ENCODE measurements at regions of chr22 and their contacts with region 1.

Region 1: GRCh38 chr22:50612528-50613221 is 12.1 kb downstream of the MAPK8IP2 start:
- DNase-seq: no peak
- ATAC-seq: peak in 1 of 4 donors; percentile 22
- H3K4me3 ChIP-seq: no peak overlapping the region
- H3K27ac ChIP-seq: no peak overlapping the region
- H3K4me1 ChIP-seq: peaks cover 0 to 6% (median 0%) of the 10 kb centered on the region in 12 donors
- H3K27me3 ChIP-seq: peaks cover 0 to 4% (median 0%) of the 10 kb centered on the region in 9 donors
- CTCF ChIP-seq: no peak
- POLR2A ChIP-seq: no peak

Region 2: GRCh38 chr22:50244420-50245213 is 368.1 kb before region 1 on chr22 and contains the start of gene TUBGCP6:
- intact Hi-C with region 1: loop called in 1 of 10 experiments (anchors 10 kb)
- DNase-seq: peak; percentile 96 to 98 (median 96)
- ATAC-seq: peak; percentile 88 to 96 (median 93)
- H3K4me3 ChIP-seq: peak within 1 kb of the TSS; percentile 51 to 99 (median 88)
- H3K27ac ChIP-seq: peak within 1 kb of the TSS; percentile 72 to 96 (median 88)
- H3K4me1 ChIP-seq: peaks cover 13 to 62% (median 44%) of the 10 kb centered on the region in 12 donors
- H3K27me3 ChIP-seq: no peaks in the 10 kb centered on the region
- CTCF ChIP-seq: peak in 7 of 12 donors; percentile 6 to 39 (median 24)
- POLR2A ChIP-seq: peak in 1 of 2 donors; percentile 81
- total RNA-seq, gene TUBGCP6: 14.1 to 28.8 (median 18.1) TPM

Region 3: GRCh38 chr22:50315289-50316115 is 297.2 kb before region 1 on chr22:
- intact Hi-C with region 1: no loop called
- DNase-seq: peak in 1 of 5 donors; percentile 14
- ATAC-seq: no peak
- H3K4me3 ChIP-seq: no peak overlapping the region
- H3K27ac ChIP-seq: no peak overlapping the region
- H3K4me1 ChIP-seq: peaks cover 0 to 20% (median 1%) of the 10 kb centered on the region in 12 donors
- H3K27me3 ChIP-seq: no peaks in the 10 kb centered on the region
- CTCF ChIP-seq: no peak
- POLR2A ChIP-seq: no peak

Region 4: GRCh38 chr22:50361688-50362087 is 251.0 kb before region 1 on chr22:
- intact Hi-C with region 1: loop called in 1 of 10 experiments (anchors 10 kb)
- DNase-seq: no peak
- ATAC-seq: no peak
- H3K4me3 ChIP-seq: no peak overlapping the region
- H3K27ac ChIP-seq: peak overlapping the region in 1 of 12 donors; percentile 15
- H3K4me1 ChIP-seq: peaks cover 0 to 31% (median 13%) of the 10 kb centered on the region in 12 donors
- H3K27me3 ChIP-seq: no peaks in the 10 kb centered on the region
- CTCF ChIP-seq: no peak
- POLR2A ChIP-seq: no peak

Region 5: DNA sequence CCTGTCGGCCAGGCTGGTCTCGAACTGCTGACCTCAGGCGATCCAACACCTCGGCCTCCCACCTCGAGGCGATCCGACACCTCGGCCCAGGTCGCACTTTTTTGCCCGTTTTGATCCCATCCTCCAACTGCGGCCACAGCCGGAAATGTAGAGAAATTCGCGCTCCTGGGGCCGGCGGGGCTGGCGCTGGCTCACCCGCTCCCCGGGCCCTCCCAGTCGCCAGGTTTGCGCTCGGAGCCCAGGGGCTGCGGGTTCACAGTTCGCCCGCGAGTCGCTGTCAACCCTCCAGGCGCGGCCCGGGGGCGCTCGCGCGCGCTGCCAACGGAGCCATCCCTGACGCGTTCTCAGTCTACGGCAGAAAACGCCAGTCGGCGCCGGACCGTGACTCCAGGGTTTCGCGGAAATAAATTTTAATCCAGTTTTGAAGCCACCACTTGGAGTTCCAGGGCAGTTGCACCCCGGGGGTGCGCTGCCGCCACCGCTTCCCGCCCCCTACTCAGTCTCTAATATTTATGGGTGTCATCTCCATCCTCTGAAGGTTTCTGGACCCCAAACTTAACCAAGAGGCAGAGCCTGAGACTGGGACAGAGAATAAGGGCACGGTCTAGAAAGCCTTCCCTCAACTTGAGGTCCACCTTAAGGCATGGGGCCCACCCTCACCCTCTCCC is 68.5 kb before region 1 on chr22:
- intact Hi-C with region 1: loop called in 2 of 10 experiments (anchors 5 to 10 kb)
- DNase-seq: peak; percentile 79 to 93 (median 84)
- ATAC-seq: peak in 3 of 4 donors; percentile 58 to 64 (median 62)
- H3K4me3 ChIP-seq: peak overlapping the region in 10 of 12 donors; percentile 26 to 54 (median 40)
- H3K27ac ChIP-seq: peak overlapping the region in 4 of 12 donors; percentile 1 to 98 (median 36)
- H3K4me1 ChIP-seq: peaks cover 0 to 88% (median 24%) of the 10 kb centered on the region in 12 donors
- H3K27me3 ChIP-seq: peaks cover 20 to 55% (median 25%) of the 10 kb centered on the region in 9 donors
- CTCF ChIP-seq: peak; percentile 30 to 76 (median 60)
- POLR2A ChIP-seq: no peak

Region 6: GRCh38 chr22:50656122-50657070 is 43.7 kb after region 1 on chr22:
- intact Hi-C with region 1: no loop called
- DNase-seq: peak in 4 of 5 donors; percentile 38 to 80 (median 74)
- ATAC-seq: peak; percentile 71 to 93 (median 85)
- H3K4me3 ChIP-seq: peak overlapping the region in 1 of 12 donors; percentile 32
- H3K27ac ChIP-seq: peak overlapping the region; percentile 50 to 92 (median 76)
- H3K4me1 ChIP-seq: peaks cover 0 to 40% (median 11%) of the 10 kb centered on the region in 12 donors
- H3K27me3 ChIP-seq: peaks cover 0 to 13% (median 0%) of the 10 kb centered on the region in 9 donors
- CTCF ChIP-seq: no peak
- POLR2A ChIP-seq: no peak